CD14-positive monocyte (primary cell): ENCODE measurements at regions of chr2 and their contacts with region 1.

Region 1: GRCh38 chr2:127404466-127405254 is 13.6 kb upstream of the PROC start:
- DNase-seq: peak; percentile 67 to 91 (median 83)
- H3K4me3 ChIP-seq: peak overlapping the region in 1 of 3 experiments; percentile 24
- H3K4me3 Mint-ChIP-seq: peak overlapping the region in 1 of 2 donors; percentile 62
- H3K27ac ChIP-seq: peak overlapping the region; percentile 75 to 87
- H3K27ac Mint-ChIP-seq: peak overlapping the region; percentile 86 to 93 (median 90)
- H3K4me1 ChIP-seq: peaks cover 38 to 43% of the 10 kb centered on the region in 2 donors
- H3K4me1 Mint-ChIP-seq: peaks cover 39% of the 10 kb centered on the region
- H3K27me3 ChIP-seq: no peaks in the 10 kb centered on the region
- H3K27me3 Mint-ChIP-seq: peaks cover 0 to 3% (median 0%) of the 10 kb centered on the region in 3 donors
- CTCF ChIP-seq: no peak

Region 2: DNA sequence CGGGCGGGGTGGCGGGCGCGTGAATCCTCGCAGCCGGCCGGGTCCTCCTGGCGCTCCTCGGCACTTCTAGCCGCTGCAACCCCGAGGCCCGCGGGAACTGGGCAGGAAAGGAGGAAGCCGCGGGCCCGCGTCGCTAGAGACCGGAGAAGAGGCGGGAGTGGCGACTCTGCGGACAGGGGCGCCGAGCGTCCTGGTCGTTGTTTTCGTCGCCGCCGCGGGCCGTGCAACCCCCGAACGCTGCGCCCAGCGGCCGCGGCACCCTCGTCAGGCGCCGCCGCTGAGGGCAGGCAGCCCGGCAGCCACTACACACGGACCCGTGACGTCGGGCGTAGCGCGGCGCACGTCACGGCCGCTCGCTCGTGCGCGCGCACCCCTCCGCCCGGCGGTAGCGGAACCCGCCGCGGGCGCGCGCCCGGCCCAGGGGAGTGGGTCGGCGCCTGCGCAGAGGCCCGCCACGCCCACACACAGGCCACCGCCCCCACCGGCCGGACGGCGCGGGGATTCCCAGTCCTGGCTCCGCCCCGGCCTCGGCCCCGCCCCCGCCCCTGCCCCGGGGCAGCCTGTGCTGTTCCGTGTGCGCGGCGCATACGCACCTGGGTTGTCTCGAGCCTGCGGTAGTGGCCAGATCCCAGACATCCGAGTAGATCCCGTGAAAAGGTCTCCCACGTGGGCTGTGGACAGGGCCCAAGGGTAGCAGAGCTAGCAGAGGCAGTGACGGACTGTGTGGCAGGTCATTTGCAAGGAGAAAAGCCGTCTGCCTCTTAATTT is 16.8 kb before region 1 on chr2 and contains the start of gene MAP3K2:
- intact Hi-C with region 1: loop called in 1 of 2 experiments (anchors 2 kb)
- DNase-seq: peak; percentile 89 to 94 (median 94)
- H3K4me3 ChIP-seq: peak within 1 kb of the TSS; percentile 53 to 97 (median 87)
- H3K4me3 Mint-ChIP-seq: peak within 1 kb of the TSS; percentile 90 to 94
- H3K27ac ChIP-seq: peak within 1 kb of the TSS; percentile 98 to 99
- H3K27ac Mint-ChIP-seq: peak within 1 kb of the TSS; percentile 98 to 100 (median 99)
- H3K4me1 ChIP-seq: peaks cover 44 to 53% of the 10 kb centered on the region in 2 donors
- H3K4me1 Mint-ChIP-seq: peaks cover 55% of the 10 kb centered on the region
- H3K27me3 ChIP-seq: no peaks in the 10 kb centered on the region
- H3K27me3 Mint-ChIP-seq: peaks cover 0 to 2% (median 0%) of the 10 kb centered on the region in 3 donors
- CTCF ChIP-seq: no peak
- polyA plus RNA-seq, gene MAP3K2: 16.0 to 86.4 (median 66.3) TPM

Region 3: DNA sequence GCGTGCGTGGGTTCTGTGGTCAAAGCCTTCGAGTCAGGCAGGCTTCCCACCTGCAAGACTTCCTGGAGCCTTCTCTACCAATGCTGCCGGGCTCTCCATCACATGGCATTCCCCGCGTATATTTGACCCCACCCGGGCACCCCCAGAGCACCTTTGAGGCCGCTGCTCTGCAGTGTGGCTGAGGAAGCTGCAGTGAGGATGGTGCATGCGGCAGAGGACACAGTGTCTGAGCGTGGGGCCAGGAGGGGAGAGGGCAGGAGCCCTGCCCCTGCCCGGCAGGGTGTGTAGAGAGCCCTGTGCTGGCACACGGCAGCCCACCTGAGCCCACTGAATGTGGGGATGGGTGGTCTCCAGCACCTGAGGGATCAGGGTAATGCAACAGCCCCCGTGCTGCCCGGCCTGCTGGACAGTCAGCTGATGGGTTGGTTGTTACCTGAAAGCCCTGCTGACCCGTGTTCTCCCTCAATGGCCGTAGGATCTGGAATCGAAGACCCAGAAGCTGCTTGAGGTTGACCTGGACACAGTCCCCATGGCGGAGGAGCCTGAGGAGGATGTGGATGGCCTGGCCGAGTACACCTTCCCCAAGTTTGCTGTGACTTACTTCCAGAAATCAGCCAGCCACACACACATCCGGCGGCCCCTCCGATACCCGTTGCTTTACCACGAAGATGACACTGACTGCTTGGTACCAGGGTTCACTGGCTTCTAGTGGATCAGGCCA is 204.5 kb after region 1 on chr2:
- intact Hi-C with region 1: no loop called
- DNase-seq: no peak
- H3K4me3 ChIP-seq: no peak overlapping the region
- H3K4me3 Mint-ChIP-seq: no peak overlapping the region
- H3K27ac ChIP-seq: no peak overlapping the region
- H3K27ac Mint-ChIP-seq: no peak overlapping the region
- H3K4me1 ChIP-seq: no peaks in the 10 kb centered on the region
- H3K4me1 Mint-ChIP-seq: no peaks in the 10 kb centered on the region
- H3K27me3 ChIP-seq: no peaks in the 10 kb centered on the region
- H3K27me3 Mint-ChIP-seq: peaks cover 0 to 2% (median 1%) of the 10 kb centered on the region in 3 donors
- CTCF ChIP-seq: no peak